Activated T-helper 1 cell treated with anti-CD3 and anti-CD28 coated beads, Interleukin-12 subunit alpha, Interleukin-12 subunit beta, Interleukin-2, Interleukin-4 antibody, amounts not matched to agents 30 ng/mL and 10 ng/mL and 1 ng/mL, durations not matched to agents 14 hours and 24 hours and 36 hours (primary cell): ENCODE measurements at regions of chr3 and their contacts with region 1.

Region 1: DNA sequence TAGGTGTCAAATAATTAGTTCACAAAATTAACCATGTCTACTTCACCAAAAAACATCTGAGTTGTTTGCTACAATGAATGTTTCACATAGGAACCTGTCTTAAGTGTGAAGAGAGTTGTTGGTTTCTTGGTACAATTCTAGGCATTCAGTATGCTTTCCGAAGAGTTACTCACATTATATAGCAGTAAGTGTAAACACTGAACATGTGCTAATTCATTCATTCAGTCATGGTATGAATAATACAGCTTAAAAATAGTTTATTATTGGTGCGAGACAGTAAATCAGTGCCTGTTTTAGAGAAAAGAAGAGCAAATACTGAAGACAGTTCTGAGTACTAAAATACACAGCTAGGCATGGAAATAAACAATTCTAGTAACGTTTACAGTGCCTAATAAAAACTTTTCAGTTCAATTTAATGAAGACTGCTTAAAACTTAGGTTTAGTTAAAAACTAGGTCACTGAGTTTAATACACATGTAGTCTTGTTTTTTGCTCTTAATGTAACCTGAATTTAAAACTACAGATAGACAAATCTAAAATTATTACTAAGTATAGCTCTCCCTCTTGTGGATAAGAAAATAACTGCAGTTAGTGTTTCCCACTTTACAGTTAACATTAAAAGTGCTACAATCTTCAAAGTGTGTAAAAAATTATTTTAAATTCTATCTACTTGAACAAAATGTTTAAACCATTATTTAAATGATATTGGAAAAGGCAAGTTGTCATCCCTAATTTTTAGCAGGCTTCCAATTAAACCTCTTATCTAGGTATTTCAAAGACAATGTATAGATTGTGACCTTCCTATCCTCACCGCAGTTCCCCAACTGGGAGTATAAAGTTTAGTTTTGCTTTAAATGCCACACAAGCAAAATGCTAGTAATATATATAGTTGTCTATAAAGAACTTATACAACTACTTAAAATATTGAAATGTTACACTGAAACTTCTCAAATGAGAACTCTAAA is 20.1 kb upstream of the ZCWPW2 start:
- DNase-seq: no peak
- H3K4me3 Mint-ChIP-seq: no peak overlapping the region
- H3K27ac Mint-ChIP-seq: peak overlapping the region; percentile 29
- H3K4me1 Mint-ChIP-seq: peaks cover 44% of the 10 kb centered on the region
- H3K27me3 Mint-ChIP-seq: peaks cover 1% of the 10 kb centered on the region

Region 2: DNA sequence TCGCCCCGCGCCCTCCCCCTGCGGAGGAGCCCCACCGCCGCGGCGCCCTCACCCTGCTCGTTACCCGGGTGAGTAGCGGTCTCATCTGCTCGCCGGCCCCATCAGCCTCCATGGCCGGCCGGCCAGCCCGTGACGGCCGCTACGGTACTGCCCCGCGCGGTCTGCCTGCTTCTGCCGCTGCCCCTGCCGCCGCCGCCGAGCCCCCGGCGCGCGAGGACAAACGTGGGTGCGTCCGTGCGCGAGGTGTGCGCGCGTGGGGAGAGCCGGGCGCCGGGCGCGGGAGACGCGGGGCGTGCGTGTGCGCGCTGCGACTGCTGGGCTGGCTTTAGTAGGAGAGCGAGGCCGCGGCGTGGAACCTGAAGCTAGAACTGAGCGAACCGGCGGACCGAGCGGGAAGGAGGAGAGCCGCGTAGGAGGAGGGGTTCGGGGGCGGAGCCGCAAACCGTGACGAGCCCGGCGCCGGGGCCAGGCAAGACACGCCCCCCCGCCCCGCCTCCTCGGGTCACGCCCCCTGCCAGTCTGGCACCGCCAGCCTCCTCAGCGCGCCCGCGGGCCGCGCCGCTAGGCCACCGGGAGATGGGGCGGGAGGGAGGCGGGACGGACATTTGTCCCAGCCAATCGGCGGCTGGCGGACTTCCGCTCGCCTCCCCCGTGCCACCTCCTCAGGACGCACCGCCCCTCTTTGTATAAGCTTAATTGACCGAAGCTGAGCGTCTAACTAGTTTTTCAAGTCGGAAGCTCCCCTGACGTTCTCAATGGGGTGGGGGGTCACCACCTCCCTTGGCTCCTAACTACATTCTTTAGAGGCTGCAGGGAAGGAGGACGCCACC is 844.2 kb before region 1 on chr3 and contains the start of gene SLC4A7:
- intact Hi-C with region 1: loop called (anchors 5 kb)
- DNase-seq: peak; percentile 96
- H3K4me3 Mint-ChIP-seq: peak within 1 kb of the TSS; percentile 100
- H3K27ac Mint-ChIP-seq: peak within 1 kb of the TSS; percentile 97
- H3K4me1 Mint-ChIP-seq: peaks cover 41% of the 10 kb centered on the region
- H3K27me3 Mint-ChIP-seq: no peaks in the 10 kb centered on the region
- total RNA-seq, gene SLC4A7: 65.5 and 66.7 TPM in 2 replicates

Region 3: DNA sequence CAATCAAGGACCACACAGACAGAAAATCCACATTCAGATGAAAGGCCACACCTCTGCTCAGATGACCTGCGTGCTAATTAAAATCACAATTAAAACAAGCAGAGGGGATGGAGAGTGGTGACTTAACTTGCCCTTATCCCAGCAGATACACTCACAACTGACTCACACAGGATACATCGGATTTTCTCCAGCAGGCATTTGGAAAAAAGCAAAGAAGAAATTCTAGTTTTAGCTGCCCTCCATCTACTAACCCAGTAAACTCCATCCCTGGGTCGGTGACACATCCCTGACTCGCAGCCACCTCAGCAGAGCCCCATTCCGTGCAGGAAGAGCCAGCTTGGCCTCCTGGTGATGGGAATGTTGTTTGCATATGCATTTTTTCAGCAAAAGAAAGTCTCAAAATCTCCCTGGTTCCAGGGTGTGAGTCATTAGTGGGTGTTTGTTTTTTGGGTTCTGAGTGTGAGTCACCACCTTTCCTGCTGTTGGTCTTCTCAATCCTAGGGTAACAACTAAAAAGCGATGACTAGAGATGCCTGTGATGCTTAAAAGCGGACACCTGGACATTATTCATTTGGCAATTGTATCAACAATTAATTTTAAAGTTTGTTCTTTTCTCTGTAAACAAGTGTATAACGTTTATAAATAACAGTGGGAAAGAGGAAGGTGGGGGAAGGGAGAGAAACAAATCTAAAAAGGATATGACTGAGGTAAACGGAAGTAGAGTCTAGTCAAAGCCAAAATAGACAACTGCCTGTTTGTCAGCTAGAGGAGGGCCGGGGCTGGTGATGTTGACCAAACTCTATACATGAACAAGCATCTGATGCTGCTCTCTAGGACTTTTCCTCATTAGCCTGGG is 794.5 kb before region 1 on chr3:
- intact Hi-C with region 1: no loop called
- DNase-seq: peak; percentile 20
- H3K4me3 Mint-ChIP-seq: peak overlapping the region; percentile 46
- H3K27ac Mint-ChIP-seq: peak overlapping the region; percentile 92
- H3K4me1 Mint-ChIP-seq: peaks cover 31% of the 10 kb centered on the region
- H3K27me3 Mint-ChIP-seq: no peaks in the 10 kb centered on the region

Region 4: DNA sequence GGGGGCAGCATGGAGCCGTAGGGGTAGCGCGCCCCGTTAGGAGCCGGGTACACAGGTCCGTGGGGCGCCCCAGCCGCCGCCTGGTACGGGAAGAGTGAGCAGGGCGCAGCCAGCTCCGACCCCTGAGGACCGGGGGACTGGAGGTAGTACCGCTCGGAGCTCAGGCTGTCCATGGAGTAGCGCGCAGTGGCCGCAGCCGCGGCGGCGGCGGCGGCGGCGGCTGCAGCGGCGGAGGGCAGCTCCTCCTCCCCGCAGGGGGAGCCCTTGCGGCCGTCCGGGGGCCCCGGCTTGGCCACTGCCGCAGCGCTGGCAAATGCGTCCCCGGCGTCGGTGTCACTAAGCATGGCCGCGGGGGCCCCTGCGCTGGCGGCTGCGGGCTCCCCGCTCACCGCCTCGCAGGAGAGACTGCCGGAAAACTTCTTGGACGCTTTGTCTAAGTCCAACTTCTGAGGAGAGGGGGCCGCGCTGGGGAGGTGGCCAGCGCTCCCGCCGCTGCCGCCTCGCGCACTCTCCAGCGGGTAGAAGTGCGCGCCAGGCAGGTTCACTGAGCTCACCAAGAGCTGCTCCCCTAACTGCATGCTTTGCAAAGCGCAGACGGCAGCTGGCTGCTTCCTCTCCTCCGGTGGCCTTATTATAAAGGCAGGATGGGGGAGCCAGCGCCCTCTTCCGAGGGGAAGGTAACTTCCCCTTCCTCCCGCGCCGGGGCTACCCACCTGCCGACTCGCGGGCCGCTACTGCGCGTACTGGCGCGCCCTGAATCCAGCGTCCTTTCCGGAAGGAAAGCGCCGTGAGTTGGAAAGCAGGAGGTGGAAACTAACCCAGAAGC is 606.5 kb before region 1 on chr3 and contains the start of gene EOMES:
- intact Hi-C with region 1: loop called (anchors 1 kb)
- DNase-seq: peak; percentile 67
- H3K4me3 Mint-ChIP-seq: peak within 1 kb of the TSS; percentile 87
- H3K27ac Mint-ChIP-seq: peak within 1 kb of the TSS; percentile 81
- H3K4me1 Mint-ChIP-seq: peaks cover 44% of the 10 kb centered on the region
- H3K27me3 Mint-ChIP-seq: peaks cover 79% of the 10 kb centered on the region
- total RNA-seq, gene EOMES: 29.6 and 30.7 TPM in 2 replicates

Region 5: GRCh38 chr3:27848826-27849225 is 479.6 kb before region 1 on chr3:
- intact Hi-C with region 1: loop called (anchors 2 kb)
- DNase-seq: no peak
- H3K4me3 Mint-ChIP-seq: no peak overlapping the region
- H3K27ac Mint-ChIP-seq: peak overlapping the region; percentile 73
- H3K4me1 Mint-ChIP-seq: peaks cover 19% of the 10 kb centered on the region
- H3K27me3 Mint-ChIP-seq: no peaks in the 10 kb centered on the region

Region 6: DNA sequence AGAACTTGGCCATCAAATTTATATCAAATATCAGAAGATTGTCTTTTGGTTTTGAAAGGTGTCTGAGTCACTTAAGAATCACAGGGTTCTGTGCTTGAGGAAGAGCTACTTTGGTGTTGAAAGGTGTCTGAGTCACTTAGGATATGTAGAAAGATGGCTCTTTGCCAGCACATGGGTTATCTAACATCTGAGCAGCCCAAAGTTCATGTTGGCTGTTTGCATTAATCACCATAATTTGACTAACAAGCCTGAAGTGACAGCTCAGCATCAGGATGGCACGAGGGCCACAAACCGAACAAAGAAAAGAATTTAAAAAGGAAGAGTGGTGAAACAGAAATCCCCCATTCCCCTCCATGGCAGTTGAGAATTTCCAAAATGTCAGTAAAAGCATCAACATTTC is 277.6 kb before region 1 on chr3:
- intact Hi-C with region 1: loop called (anchors 2 kb)
- DNase-seq: no peak
- H3K4me3 Mint-ChIP-seq: no peak overlapping the region
- H3K27ac Mint-ChIP-seq: peak overlapping the region; percentile 18
- H3K4me1 Mint-ChIP-seq: peaks cover 12% of the 10 kb centered on the region
- H3K27me3 Mint-ChIP-seq: no peaks in the 10 kb centered on the region

Region 7: GRCh38 chr3:28348629-28349483 is 20.4 kb after region 1 on chr3 and contains the starts of genes AZI2 and ZCWPW2:
- intact Hi-C with region 1: loop called (anchors 1 kb)
- DNase-seq: peak; percentile 90
- H3K4me3 Mint-ChIP-seq: peak within 1 kb of the TSS; percentile 98
- H3K27ac Mint-ChIP-seq: peak within 1 kb of the TSS; percentile 98
- H3K4me1 Mint-ChIP-seq: peaks cover 66% of the 10 kb centered on the region
- H3K27me3 Mint-ChIP-seq: no peaks in the 10 kb centered on the region
- total RNA-seq, gene AZI2: 43.7 and 44.8 TPM in 2 replicates
- total RNA-seq, gene ZCWPW2: 0.24 TPM in 1 of 2 replicates, not detected in the other

Region 8: DNA sequence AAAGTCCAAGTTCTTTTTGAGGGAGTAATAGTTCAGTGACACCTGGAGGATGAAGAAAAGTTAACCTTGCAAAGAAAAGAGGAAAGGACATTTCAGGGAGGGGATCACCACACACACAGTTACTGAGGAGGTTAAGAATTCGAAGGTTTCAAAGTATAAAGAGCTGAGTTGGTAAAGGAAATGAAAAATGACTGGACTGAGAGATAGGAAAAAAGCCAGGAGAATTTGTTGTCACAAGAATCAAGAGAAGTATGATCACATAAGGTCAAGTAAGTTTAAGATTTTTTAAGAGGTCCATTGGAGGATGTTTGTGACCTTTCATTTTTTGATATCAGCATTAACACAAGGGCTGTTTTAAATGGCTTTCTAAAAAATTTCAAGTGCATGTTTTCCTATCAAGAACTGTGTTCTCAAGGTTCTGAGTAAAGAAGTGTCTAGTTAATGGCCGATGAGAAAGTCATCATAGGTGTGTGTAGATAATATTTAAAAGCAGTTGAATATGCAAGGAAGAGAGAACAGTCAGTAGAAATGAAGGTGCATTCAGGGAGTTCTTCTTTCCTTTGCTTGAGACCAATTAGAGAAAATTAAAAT is 763.2 kb after region 1 on chr3:
- intact Hi-C with region 1: no loop called
- DNase-seq: no peak
- H3K4me3 Mint-ChIP-seq: no peak overlapping the region
- H3K27ac Mint-ChIP-seq: peak overlapping the region; percentile 0
- H3K4me1 Mint-ChIP-seq: no peaks in the 10 kb centered on the region
- H3K27me3 Mint-ChIP-seq: no peaks in the 10 kb centered on the region